ENCODE measurements at regions of chr2 and their contacts with region 1.

Region 1: GRCh38 chr2:96241900-96242611 is 23.7 kb downstream of the TMEM127 start:
- DNase-seq: peak in 7 of 10 donors; percentile 23 to 49 (median 27)
- ATAC-seq: peak; percentile 81 to 85
- H3K4me3 Mint-ChIP-seq: peak overlapping the region; percentile 42 to 80 (median 70)
- H3K27ac Mint-ChIP-seq: peak overlapping the region; percentile 85 to 97 (median 94)
- H3K4me1 Mint-ChIP-seq: peaks cover 28 to 57% (median 49%) of the 10 kb centered on the region in 4 donors
- H3K27me3 Mint-ChIP-seq: no peaks in the 10 kb centered on the region

Region 2: DNA sequence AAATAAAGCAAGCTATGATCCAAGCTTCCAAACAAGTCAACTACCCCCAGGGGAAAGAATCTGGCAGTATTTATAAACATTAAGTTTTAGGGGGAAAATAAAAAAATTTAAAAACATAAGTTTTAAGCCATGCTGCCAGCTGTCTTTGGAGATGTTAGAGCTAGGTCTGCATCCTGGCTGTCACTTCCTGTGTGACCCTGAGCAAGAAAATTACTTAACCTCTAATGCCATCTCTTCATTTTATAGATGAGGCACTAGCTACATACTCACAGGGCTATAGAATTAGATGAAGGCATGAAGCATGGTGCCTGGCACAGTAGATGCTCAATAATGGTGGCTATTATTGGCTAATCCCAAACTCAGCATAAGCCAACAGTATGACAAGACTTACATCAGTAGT is 61.5 kb before region 1 on chr2:
- POLR2A ChIA-PET with region 1: no interaction called
- DNase-seq: no peak
- ATAC-seq: no peak
- H3K4me3 Mint-ChIP-seq: no peak overlapping the region
- H3K27ac Mint-ChIP-seq: peak overlapping the region in 3 of 10 donors; percentile 4 to 66 (median 37)
- H3K4me1 Mint-ChIP-seq: peaks cover 6 to 19% (median 15%) of the 10 kb centered on the region in 4 donors
- H3K27me3 Mint-ChIP-seq: no peaks in the 10 kb centered on the region

Region 3: DNA sequence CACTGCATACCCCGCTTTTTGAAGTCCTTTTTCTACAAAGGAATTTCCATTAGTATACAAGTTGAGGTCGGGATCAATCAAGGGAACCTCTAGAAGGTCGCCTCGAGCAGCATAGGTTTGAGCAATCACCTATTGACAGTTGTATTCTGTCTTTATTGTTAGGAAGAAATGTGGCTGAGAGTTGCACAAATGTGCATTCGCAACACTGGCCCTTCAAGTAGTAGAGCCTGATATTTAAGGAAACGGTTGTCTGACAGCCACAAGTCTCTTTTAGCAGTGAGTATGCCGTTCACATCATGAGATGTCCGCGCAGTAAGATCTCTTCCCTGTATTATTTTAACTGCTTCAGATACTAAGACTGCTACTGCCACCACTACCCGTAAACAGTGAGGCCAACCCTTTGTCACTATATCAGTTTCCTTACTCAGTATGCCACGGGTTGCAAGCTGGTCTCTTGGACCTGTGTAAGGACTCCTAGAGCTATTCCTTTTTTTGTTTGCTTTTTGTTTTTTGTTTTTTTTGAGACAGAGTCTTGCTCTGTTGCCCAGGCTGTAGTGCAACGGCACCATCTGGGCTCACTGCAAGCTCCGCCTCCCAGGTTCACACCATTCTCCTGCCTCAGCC is 23.4 kb before region 1 on chr2:
- POLR2A ChIA-PET with region 1: no interaction called
- DNase-seq: no peak
- ATAC-seq: no peak
- H3K4me3 Mint-ChIP-seq: no peak overlapping the region
- H3K27ac Mint-ChIP-seq: no peak overlapping the region
- H3K4me1 Mint-ChIP-seq: peaks cover 0 to 5% (median 4%) of the 10 kb centered on the region in 4 donors
- H3K27me3 Mint-ChIP-seq: no peaks in the 10 kb centered on the region

Region 4: DNA sequence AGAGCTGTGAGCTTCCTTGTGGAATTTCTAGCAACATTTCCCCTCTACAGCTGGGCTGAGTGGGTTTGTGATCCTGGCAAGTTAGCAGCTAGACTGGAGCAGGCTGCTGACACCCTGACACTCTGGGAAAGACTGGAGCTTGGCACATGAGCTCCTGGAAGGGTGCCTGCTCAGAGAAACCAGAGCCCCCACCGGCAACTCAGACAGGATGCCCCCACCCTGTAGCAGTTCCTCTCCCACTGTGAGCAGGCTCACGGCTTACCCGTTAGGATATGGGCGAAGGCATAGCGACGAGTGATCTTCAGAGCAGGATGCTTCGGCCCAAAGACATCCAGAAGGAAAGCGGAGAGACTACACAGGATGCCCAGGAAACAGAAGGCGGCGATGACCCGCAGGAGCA is 12.5 kb after region 1 on chr2:
- POLR2A ChIA-PET with region 1: interaction called, 16 read pairs
- DNase-seq: no peak
- ATAC-seq: no peak
- H3K4me3 Mint-ChIP-seq: peak overlapping the region in 6 of 10 donors; percentile 5 to 81 (median 42)
- H3K27ac Mint-ChIP-seq: peak overlapping the region; percentile 11 to 96 (median 84)
- H3K4me1 Mint-ChIP-seq: peaks cover 28 to 62% (median 60%) of the 10 kb centered on the region in 4 donors
- H3K27me3 Mint-ChIP-seq: no peaks in the 10 kb centered on the region

Region 5: GRCh38 chr2:96320728-96321622 is 78.9 kb after region 1 on chr2:
- POLR2A ChIA-PET with region 1: no interaction called
- DNase-seq: peak in 1 of 10 donors; percentile 9
- ATAC-seq: peak; percentile 26 to 35
- H3K4me3 Mint-ChIP-seq: peak overlapping the region; percentile 75 to 94 (median 90)
- H3K27ac Mint-ChIP-seq: peak overlapping the region; percentile 50 to 87 (median 74)
- H3K4me1 Mint-ChIP-seq: peaks cover 25 to 66% (median 60%) of the 10 kb centered on the region in 4 donors
- H3K27me3 Mint-ChIP-seq: no peaks in the 10 kb centered on the region

Region 6: GRCh38 chr2:96470636-96471035 is 228.6 kb after region 1 on chr2:
- POLR2A ChIA-PET with region 1: no interaction called
- DNase-seq: peak in 8 of 10 donors; percentile 8 to 53 (median 42)
- ATAC-seq: peak; percentile 76 to 90
- H3K4me3 Mint-ChIP-seq: peak overlapping the region in 5 of 10 donors; percentile 39 to 60 (median 55)
- H3K27ac Mint-ChIP-seq: no peak overlapping the region
- H3K4me1 Mint-ChIP-seq: peaks cover 2 to 12% (median 4%) of the 10 kb centered on the region in 4 donors
- H3K27me3 Mint-ChIP-seq: peaks cover 3 to 9% (median 6%) of the 10 kb centered on the region in 5 donors

Measured in naive thymus-derived CD8-positive, alpha-beta T cell (primary cell).